Activated T-helper 1 cell treated with anti-CD3 and anti-CD28 coated beads, Interleukin-12 subunit alpha, Interleukin-12 subunit beta, Interleukin-2, Interleukin-4 antibody, amounts not matched to agents 30 ng/mL and 10 ng/mL and 1 ng/mL, durations not matched to agents 14 hours and 24 hours and 36 hours (primary cell): ENCODE measurements at regions of chr17 and their contacts with region 1.

Region 1: GRCh38 chr17:50026901-50027630 is 28.8 kb upstream of the ITGA3 start:
- DNase-seq: peak; percentile 61
- H3K4me3 Mint-ChIP-seq: peak overlapping the region; percentile 75
- H3K27ac Mint-ChIP-seq: no peak overlapping the region
- H3K4me1 Mint-ChIP-seq: peaks cover 9% of the 10 kb centered on the region
- H3K27me3 Mint-ChIP-seq: peaks cover 9% of the 10 kb centered on the region

Region 2: DNA sequence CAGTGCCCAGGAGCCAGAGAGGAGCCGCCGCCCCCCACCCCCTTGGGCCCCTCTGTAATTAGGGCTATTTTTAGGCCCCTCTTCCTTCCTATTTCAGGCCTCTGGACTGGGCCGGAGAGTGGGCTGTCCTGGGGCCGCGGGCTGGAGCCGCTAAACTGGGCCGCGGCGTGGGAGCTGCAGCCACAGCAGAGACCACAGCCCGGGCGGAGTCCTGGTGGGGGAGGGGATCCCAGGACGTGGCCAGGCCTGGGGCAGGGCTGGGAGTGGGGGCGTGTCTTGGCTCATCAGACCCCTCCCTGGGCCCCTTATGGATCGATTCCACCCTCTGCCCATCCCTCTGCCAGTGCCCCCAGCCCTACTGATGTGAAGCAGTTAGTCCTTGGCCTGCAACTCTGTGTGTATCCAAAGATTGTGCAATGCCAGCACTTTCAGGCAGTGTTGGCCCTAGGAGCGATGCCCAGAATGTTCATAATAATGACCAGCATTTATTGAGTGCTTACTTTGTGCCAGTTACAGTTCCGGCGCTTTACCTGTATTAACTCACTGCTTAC is 164.2 kb before region 1 on chr17:
- intact Hi-C with region 1: no loop called
- DNase-seq: no peak
- H3K4me3 Mint-ChIP-seq: no peak overlapping the region
- H3K27ac Mint-ChIP-seq: no peak overlapping the region
- H3K4me1 Mint-ChIP-seq: peaks cover 6% of the 10 kb centered on the region
- H3K27me3 Mint-ChIP-seq: peaks cover 2% of the 10 kb centered on the region

Region 3: DNA sequence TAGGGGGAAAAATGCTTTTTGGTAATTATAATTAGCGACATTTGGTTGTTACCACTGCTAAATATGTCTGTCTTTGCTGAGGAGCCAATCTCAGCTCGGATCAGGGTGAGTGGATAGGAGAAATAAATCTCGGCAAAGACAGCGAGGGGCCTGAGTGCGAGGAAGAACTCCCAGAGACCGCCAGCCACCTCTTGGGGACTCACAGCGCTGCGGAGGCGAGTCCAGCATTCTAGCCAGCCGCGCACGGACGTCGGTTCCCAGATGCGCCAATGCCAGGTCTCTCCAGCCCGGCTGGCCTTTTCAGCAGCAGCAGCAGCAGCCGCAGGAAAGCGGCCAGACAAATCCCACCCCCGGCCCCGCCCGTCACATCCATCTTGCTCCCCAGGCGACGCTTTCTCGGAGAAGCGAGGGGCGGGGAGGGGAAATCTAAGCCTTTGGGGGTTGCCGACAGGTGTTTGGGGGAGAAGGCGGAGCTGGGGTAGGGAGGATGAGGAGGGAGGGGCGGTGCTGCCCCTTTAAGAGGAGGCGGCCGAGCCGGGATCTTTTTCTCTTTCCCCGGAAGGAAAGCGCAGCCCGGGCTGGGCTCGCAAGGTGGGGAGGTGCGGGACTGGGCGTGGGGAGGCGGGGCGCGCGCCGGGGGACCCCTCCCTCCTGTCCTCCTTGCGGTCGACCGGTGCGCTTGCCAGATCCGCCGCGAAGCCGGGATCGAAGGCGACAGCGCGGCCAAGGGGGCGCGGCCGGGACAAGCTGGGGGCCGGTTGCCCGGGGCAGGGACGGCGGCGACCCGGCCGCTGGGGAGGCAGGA is 28.6 kb after region 1 on chr17 and contains the start of gene ITGA3:
- intact Hi-C with region 1: loop called (anchors 1 kb)
- DNase-seq: peak; percentile 67
- H3K4me3 Mint-ChIP-seq: peak within 1 kb of the TSS; percentile 89
- H3K27ac Mint-ChIP-seq: peak within 1 kb of the TSS; percentile 74
- H3K4me1 Mint-ChIP-seq: peaks cover 63% of the 10 kb centered on the region
- H3K27me3 Mint-ChIP-seq: no peaks in the 10 kb centered on the region
- total RNA-seq, gene ITGA3: 18.0 and 20.6 TPM in 2 replicates

Region 4: DNA sequence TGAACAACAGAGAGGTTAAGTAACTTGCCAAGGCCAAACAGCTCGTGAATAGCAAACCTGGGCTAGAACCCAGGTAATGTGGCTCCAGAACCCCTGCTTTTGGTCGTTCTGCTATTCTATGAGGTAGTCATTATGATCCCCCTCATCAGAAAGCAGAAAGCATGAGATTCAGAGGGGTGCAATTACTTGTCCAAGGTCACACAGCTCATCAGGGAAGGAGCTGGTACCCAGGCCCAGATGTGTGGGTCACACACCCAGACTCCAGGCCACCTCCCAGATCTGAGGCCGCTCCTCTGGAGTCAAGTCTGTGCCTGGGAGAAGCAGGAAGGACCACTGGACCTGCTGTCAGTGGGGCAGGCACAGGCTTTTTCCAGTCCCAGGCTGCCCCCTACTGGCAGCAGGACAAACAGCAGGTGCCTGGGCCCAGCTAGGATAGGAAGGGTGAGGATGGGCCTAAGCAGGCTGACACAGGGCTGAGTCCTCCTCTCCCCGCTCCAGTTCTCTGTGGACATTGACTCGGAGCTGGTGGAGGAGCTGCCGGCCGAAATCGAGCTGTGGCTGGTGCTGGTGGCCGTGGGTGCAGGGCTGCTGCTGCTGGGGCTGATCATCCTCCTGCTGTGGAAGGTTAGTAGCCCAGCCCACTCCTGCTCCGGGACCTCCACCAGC is 60.3 kb after region 1 on chr17:
- intact Hi-C with region 1: loop called (anchors 1 kb)
- DNase-seq: peak; percentile 72
- H3K4me3 Mint-ChIP-seq: no peak overlapping the region
- H3K27ac Mint-ChIP-seq: no peak overlapping the region
- H3K4me1 Mint-ChIP-seq: no peaks in the 10 kb centered on the region
- H3K27me3 Mint-ChIP-seq: no peaks in the 10 kb centered on the region

Region 5: DNA sequence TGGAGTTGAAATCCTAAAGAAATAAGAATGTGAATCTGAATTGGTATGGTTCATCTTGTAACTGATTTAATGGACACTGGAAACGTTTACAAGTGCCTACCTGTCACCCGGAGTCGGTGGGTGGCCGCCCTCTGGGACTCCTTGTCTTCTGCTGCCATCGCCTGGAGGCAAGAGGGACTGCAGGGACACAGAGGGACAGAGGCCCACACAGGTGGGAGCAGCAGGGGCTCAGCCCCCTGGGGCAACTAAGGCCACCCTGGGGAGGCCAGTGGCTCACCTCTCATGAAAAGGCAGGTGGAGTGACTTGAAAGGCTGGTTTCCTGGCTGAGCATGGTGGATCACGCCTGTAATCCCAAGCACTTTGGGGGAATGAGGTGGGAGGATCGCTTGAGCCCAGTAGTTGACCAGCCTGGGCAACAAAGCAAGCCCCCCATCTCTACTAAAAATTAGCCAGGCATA is 270.4 kb after region 1 on chr17:
- intact Hi-C with region 1: loop called (anchors 2 kb)
- DNase-seq: peak; percentile 69
- H3K4me3 Mint-ChIP-seq: no peak overlapping the region
- H3K27ac Mint-ChIP-seq: no peak overlapping the region
- H3K4me1 Mint-ChIP-seq: peaks cover 8% of the 10 kb centered on the region
- H3K27me3 Mint-ChIP-seq: peaks cover 3% of the 10 kb centered on the region